Thyroid gland (tissue), 4 donors: ENCODE measurements at regions of chr5 and their contacts with region 1.

Region 1: DNA sequence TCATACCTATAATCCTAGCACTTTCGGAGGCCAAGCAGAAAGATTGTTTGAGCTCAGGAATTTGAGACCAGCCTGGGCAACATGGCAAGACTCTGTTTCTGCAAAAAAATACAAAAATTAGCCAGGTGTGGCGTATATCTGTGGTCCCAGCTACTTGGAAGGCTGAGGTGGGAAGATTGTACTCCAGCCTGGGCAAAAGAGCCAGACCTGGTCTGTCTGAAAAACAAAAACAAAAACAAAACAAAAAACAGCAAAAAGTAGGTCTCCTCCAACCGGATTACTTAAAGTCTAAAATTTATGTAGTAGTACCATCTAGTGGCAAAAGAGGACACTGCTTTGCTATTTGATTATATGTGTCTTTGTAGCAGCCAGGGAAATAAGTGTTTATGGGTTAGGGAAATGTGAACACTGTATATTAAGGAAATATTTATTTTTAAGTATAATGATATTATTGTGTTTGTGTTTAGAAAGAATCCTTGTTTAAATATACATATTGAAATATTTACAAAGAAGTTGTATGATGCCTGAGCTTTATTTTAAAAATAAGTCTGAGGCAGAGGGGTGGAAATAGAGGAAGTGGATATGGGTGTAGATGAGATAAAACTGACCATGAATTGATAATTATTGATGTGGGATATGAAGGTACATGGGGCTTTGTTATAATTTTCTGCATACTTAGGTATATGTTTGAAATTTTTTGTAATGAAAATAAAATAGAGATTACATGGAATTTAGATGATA is 20.0 kb downstream of the APC start:
- DNase-seq: no peak
- H3K4me3 ChIP-seq: no peak overlapping the region
- H3K27ac ChIP-seq: no peak overlapping the region
- H3K4me1 ChIP-seq: peaks cover 0 to 7% of the 10 kb centered on the region in 2 donors
- H3K27me3 ChIP-seq: no peaks in the 10 kb centered on the region
- CTCF ChIP-seq: peak; percentile 42 to 92 (median 73)
- POLR2A ChIP-seq: no peak

Region 2: GRCh38 chr5:112551419-112552032 is 206.1 kb before region 1 on chr5:
- intact Hi-C with region 1: loop called (anchors 2 kb)
- DNase-seq: peak; percentile 17 to 25
- H3K4me3 ChIP-seq: no peak overlapping the region
- H3K27ac ChIP-seq: no peak overlapping the region
- H3K4me1 ChIP-seq: peaks cover 4 to 12% of the 10 kb centered on the region in 2 donors
- H3K27me3 ChIP-seq: no peaks in the 10 kb centered on the region
- CTCF ChIP-seq: peak; percentile 59 to 86 (median 71)
- POLR2A ChIP-seq: no peak

Region 3: GRCh38 chr5:112968411-112969106 is 210.9 kb after region 1 on chr5:
- intact Hi-C with region 1: no loop called
- DNase-seq: no peak
- H3K4me3 ChIP-seq: no peak overlapping the region
- H3K27ac ChIP-seq: no peak overlapping the region
- H3K4me1 ChIP-seq: no peaks in the 10 kb centered on the region
- H3K27me3 ChIP-seq: no peaks in the 10 kb centered on the region
- CTCF ChIP-seq: no peak
- POLR2A ChIP-seq: no peak